Tibial artery (tissue), 4 donors: ENCODE measurements at regions of chr5 and their contacts with region 1.

Region 1: GRCh38 chr5:127875235-127876021 is 172.2 kb downstream of the CCDC192 start:
- DNase-seq: no peak
- H3K4me3 ChIP-seq: no peak overlapping the region
- H3K27ac ChIP-seq: no peak overlapping the region
- H3K4me1 ChIP-seq: peaks cover 0 to 26% (median 13%) of the 10 kb centered on the region in 4 donors
- H3K27me3 ChIP-seq: no peaks in the 10 kb centered on the region
- CTCF ChIP-seq: no peak

Region 2: DNA sequence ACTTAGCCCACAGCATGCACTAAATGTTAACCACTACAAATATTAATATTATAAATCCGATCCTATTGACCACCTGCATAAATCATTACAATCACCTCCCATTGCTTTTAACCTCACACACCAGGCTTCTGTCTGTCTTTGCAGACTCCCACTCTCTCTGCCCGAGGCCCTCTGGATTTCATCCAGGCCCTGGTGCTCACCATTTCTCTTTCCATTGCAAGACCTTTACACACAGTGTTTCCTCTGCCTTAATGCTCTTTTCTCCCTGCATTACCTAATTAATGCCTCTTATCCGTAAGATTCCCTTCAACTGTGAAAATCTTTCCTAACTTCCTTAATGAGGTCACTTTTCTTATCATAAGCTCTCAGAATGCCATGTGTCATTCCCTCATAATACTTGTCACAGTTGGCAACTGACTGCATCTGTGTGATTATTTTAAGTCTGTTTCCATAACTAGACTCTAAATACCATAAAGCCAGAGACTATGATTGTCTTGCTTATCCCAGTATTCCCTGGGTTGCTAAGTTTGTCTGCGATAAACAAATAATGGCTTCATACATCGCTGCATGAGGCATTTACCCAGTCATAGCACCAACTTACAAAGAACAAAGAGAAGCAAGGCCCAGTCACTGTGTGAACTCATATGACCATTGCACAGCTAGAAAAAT is 17.2 kb before region 1 on chr5:
- intact Hi-C with region 1: loop called (anchors 2 kb)
- DNase-seq: no peak
- H3K4me3 ChIP-seq: no peak overlapping the region
- H3K27ac ChIP-seq: no peak overlapping the region
- H3K4me1 ChIP-seq: no peaks in the 10 kb centered on the region
- H3K27me3 ChIP-seq: no peaks in the 10 kb centered on the region
- CTCF ChIP-seq: no peak

Region 3: DNA sequence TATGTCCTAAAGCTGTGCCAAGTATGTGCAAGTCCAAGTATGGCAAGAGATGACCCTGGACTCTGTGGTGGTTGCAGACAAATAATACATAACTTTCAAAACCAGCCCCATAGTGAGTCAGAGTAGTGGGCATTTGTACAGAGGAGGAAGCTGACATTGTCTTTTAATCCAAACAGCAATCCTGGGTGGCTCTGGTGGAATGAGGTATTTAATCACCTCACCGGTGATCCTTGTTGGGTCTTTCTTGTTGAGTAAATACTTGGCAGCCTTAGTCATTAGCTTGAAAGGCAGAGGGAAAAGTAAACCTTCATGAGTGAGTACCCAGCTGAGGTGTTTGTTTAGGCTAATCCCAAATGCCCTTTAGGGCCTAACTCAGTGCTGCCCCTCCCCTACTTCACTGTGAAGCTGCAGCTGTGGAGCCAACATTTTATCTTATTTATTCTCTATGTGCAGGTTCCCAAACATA is 59.4 kb after region 1 on chr5:
- intact Hi-C with region 1: no loop called
- DNase-seq: no peak
- H3K4me3 ChIP-seq: no peak overlapping the region
- H3K27ac ChIP-seq: no peak overlapping the region
- H3K4me1 ChIP-seq: no peaks in the 10 kb centered on the region
- H3K27me3 ChIP-seq: no peaks in the 10 kb centered on the region
- CTCF ChIP-seq: no peak

Region 4: DNA sequence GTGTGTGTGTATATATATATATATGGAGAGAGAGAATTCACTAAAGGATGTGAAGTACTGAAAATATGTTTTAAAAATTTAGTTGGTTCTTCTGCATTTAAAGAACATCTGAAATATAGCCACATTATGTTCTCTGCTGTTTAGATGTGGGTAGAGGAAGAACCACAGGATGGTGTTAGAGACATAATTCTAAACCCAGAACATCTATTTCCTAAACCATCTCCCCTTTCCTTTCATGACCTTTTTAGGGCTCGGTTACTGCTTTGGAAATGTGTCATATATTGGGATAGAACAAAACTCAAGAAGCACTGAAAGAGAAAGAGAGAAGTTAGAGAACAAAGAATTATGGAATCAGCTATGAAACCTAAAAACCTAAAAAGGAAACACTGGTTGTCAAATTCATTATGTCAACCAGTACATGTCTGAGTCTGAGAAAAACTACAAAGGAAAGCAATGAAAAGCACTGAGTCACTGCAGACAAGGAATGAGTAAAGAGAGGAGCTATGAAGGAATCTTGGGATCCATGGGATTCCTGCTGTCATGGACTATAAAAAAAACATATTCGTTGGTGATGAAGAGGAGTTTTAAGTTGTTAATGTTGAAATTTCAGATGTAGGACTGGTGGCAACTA is 236.5 kb after region 1 on chr5:
- intact Hi-C with region 1: loop called (anchors 10 kb)
- DNase-seq: no peak
- H3K4me3 ChIP-seq: no peak overlapping the region
- H3K27ac ChIP-seq: no peak overlapping the region
- H3K4me1 ChIP-seq: no peaks in the 10 kb centered on the region
- H3K27me3 ChIP-seq: no peaks in the 10 kb centered on the region
- CTCF ChIP-seq: no peak